GM12878 (cell line): ENCODE measurements at regions of chr7 and their contacts with region 1.

Region 1: GRCh38 chr7:55928006-55928767 is 23.5 kb upstream of the MRPS17 start:
- DNase-seq: no peak
- ATAC-seq: no peak
- H3K4me3 ChIP-seq: no peak overlapping the region
- H3K27ac ChIP-seq: no peak overlapping the region
- H3K4me1 ChIP-seq: no peaks in the 10 kb centered on the region
- H3K27me3 ChIP-seq: no peaks in the 10 kb centered on the region
- CTCF ChIP-seq: no peak
- EP300 ChIP-seq: no peak
- POLR2A ChIP-seq: no peak
- RAD21 ChIP-seq: no peak

Region 2: DNA sequence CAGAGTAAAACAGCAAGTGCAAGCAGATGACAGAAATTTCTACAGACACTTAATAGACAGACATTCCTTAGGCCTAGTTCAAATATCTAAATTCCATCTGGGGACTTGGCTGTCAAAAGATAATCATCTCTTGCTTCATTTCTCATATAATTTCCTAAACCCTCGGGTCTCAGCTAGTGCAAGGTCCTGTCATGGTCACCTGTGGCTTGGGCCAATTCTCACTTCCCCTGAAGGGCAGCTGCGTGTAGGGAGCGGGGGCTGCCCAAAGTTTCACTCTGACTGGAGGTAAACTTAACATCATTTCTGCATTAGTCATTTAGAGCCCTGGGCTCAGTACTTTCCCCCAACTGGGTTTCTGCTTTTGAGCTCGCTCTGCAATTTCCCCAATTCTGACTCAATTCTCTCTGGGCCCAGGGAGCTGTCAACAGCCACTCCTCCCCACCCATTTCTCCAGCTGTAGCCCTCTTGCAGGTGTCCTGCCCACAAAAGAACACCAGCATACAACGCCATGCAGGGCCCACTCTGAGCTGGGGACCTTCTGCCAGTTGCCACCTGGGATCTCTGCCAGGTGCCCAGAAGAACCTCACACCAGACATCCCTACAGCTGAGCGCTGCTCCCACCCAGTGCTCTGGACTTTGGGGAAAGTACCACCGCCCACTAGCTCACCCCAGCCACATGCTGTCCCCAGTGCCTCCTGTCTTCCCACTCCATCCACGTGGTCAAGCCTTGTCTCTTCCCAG is 393.8 kb before region 1 on chr7:
- CTCF ChIA-PET with region 1: no interaction called
- POLR2A ChIA-PET with region 1: no interaction called
- RAD21 ChIA-PET with region 1: no interaction called
- SMC1A ChIA-PET with region 1: no interaction called
- in situ Hi-C with region 1: no loop called
- intact Hi-C with region 1: no loop called
- DNase-seq: peak; percentile 99
- ATAC-seq: peak; percentile 68
- H3K4me3 ChIP-seq: peak overlapping the region; percentile 78
- H3K27ac ChIP-seq: peak overlapping the region; percentile 100
- H3K4me1 ChIP-seq: peaks cover 84% of the 10 kb centered on the region
- H3K27me3 ChIP-seq: no peaks in the 10 kb centered on the region
- CTCF ChIP-seq: no peak
- EP300 ChIP-seq: peak; percentile 100
- POLR2A ChIP-seq: peak; percentile 85
- RAD21 ChIP-seq: peak; percentile 36

Region 3: GRCh38 chr7:55939514-55940123 is 11.4 kb after region 1 on chr7:
- CTCF ChIA-PET with region 1: no interaction called
- POLR2A ChIA-PET with region 1: no interaction called
- RAD21 ChIA-PET with region 1: no interaction called
- SMC1A ChIA-PET with region 1: no interaction called
- in situ Hi-C with region 1: no loop called
- intact Hi-C with region 1: loop called (anchors 2 kb)
- DNase-seq: no peak
- ATAC-seq: no peak
- H3K4me3 ChIP-seq: no peak overlapping the region
- H3K27ac ChIP-seq: no peak overlapping the region
- H3K4me1 ChIP-seq: no peaks in the 10 kb centered on the region
- H3K27me3 ChIP-seq: no peaks in the 10 kb centered on the region
- CTCF ChIP-seq: no peak
- EP300 ChIP-seq: no peak
- POLR2A ChIP-seq: no peak
- RAD21 ChIP-seq: no peak

Region 4: DNA sequence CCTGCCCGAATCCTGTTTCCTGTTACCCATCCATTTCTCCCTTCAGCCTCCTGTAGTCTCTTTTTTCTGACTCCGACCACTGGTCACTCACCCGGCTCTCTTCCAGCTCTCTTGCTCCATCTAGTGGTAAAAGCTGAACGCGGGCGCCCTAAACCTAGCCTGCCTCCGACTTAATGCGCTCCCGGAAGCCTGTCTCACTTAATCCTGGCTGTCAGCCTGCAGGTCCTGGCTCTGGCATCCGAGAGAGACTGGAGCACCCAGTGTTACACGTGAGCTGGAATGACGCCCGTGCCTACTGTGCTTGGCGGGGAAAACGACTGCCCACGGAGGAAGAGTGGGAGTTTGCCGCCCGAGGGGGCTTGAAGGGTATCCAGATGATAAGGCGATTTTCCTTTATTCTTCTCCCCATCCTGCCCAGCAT is 146.2 kb after region 1 on chr7:
- CTCF ChIA-PET with region 1: no interaction called
- POLR2A ChIA-PET with region 1: no interaction called
- RAD21 ChIA-PET with region 1: no interaction called
- SMC1A ChIA-PET with region 1: no interaction called
- in situ Hi-C with region 1: no loop called
- intact Hi-C with region 1: no loop called
- DNase-seq: no peak
- ATAC-seq: peak; percentile 99
- H3K4me3 ChIP-seq: no peak overlapping the region
- H3K27ac ChIP-seq: no peak overlapping the region
- H3K4me1 ChIP-seq: no peaks in the 10 kb centered on the region
- H3K27me3 ChIP-seq: no peaks in the 10 kb centered on the region
- CTCF ChIP-seq: peak; percentile 85 to 90 (median 86)
- EP300 ChIP-seq: no peak
- POLR2A ChIP-seq: no peak
- RAD21 ChIP-seq: peak; percentile 91